ENCODE measurements at regions of chr20 and their contacts with region 1.

Region 1: GRCh38 chr20:62937366-62938104 is 412 bp upstream of the GID8 start:
- DNase-seq: peak; percentile 95

Region 2: GRCh38 chr20:62926239-62927104 is 11.1 kb before region 1 on chr20 and contains the start of gene DIDO1:
- CTCF ChIA-PET with region 1: no interaction called
- POLR2A ChIA-PET with region 1: interaction called, 50 read pairs
- DNase-seq: peak; percentile 95